ENCODE measurements at regions of chr11 and their contacts with region 1.

Region 1: GRCh38 chr11:72642884-72643511 is 31.2 kb downstream of the PDE2A start:
- DNase-seq: peak; percentile 79
- ATAC-seq: peak; percentile 90

Region 2: GRCh38 chr11:72483412-72484186 is 159.4 kb before region 1 on chr11:
- intact Hi-C with region 1: loop called (anchors 10 kb)
- DNase-seq: no peak
- ATAC-seq: peak; percentile 70

Region 3: GRCh38 chr11:72598906-72599305 is 44.1 kb before region 1 on chr11:
- intact Hi-C with region 1: loop called (anchors 1 kb)
- DNase-seq: peak; percentile 78
- ATAC-seq: peak; percentile 90

Region 4: DNA sequence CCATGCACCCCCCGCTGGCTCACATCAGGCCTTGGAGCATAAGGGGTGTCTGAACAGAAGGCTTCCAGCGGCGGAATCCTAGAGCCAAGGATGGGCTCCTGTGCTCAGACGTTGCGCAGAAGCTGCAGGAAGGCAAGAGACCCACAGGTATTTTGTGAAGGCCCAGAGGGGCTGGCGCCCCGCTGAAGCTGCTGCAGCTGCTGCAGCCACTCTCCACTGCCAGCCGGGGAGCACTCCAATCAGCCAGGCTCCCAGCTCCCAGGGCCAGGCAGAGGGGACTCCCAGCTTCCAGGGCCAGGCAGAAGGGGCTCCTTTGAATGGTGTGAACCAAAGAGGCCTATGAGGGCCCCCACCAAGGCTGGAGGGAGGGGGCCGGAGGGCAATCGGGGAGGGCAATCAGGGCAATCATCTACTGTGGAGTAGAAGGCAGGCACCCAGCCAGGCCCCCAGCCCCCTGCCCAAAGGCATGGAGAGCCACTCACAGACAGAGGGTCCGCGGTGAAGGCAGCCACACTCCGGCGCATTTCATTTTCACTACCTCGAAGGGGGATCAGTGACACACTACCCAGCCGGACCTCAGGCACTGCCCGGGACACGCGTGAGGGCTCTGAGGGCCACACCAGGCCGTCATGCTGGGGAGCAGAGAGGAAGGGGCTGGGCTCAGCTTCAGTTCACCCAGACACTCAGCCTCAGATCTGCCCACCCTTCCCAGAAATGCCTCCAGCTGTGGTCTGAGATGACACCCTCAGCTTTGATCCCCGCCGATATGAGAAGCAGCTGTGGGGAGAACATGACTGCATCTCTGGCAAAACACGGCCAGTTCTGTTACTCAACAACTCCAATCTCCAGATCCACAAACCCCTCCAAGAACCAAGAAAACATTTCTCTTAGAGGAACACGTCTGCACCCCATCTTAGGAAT is 42.8 kb after region 1 on chr11:
- intact Hi-C with region 1: no loop called
- DNase-seq: peak; percentile 68
- ATAC-seq: peak; percentile 7

Region 5: GRCh38 chr11:72758690-72759389 is 115.8 kb after region 1 on chr11:
- intact Hi-C with region 1: no loop called
- DNase-seq: peak; percentile 51
- ATAC-seq: peak; percentile 18